ENCODE measurements at regions of chr14 and their contacts with region 1.

Region 1: DNA sequence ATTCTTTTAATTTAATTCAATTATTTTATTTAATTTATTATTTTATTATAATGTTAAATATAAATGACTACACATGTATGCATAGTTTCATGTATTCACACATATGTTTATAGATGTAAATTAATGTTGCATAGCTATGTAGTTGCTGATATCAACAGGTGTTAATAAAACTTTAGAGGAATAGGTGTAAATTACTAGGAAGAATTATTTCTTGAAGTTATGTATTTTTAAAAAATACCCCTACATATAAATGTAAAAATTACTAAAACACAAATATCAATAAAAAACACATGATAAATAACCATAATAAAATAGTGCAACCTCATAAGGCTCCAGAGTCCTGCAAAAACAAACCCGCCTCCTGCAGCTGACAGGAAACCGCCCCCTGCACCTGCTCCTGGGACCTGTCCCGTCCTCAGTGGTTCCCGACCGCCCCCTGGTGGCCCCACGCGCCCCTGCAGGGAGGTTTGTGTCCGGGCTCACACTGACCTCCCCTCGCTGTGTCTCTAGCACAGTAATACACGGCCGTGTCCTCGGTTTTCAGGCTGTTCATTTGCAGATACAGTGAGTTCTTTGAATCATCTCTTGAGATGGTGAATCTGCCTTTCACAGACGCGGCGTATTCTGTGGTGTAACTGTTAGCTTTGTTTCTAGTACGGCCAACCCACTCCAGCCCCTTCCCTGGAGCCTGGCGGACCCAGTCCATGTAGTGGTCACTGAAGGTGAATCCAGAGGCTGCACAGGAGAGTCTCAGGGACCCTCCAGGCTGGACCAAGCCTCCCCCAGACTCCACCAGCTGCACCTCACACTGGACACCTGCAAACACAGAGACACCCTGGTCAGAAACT is 1264.0 kb downstream of the TMEM121 start:
- DNase-seq: peak; percentile 77
- CTCF ChIP-seq: peak; percentile 83

Region 2: GRCh38 chr14:106728611-106729010 is 61.8 kb before region 1 on chr14:
- CTCF ChIA-PET with region 1: no interaction called
- POLR2A ChIA-PET with region 1: no interaction called
- DNase-seq: no peak
- CTCF ChIP-seq: no peak

Region 3: GRCh38 chr14:106776395-106776983 is 13.9 kb before region 1 on chr14:
- CTCF ChIA-PET with region 1: interaction called, 14 read pairs
- POLR2A ChIA-PET with region 1: no interaction called
- DNase-seq: no peak
- CTCF ChIP-seq: no peak

Region 4: GRCh38 chr14:106802423-106803364 is 12.3 kb after region 1 on chr14:
- CTCF ChIA-PET with region 1: interaction called, 23 read pairs
- POLR2A ChIA-PET with region 1: no interaction called
- DNase-seq: peak; percentile 26
- CTCF ChIP-seq: peak; percentile 35

Region 5: GRCh38 chr14:106823552-106823951 is 33.1 kb after region 1 on chr14:
- CTCF ChIA-PET with region 1: interaction called, 23 read pairs
- POLR2A ChIA-PET with region 1: no interaction called
- DNase-seq: no peak
- CTCF ChIP-seq: no peak

Region 6: GRCh38 chr14:106837870-106838269 is 47.5 kb after region 1 on chr14:
- CTCF ChIA-PET with region 1: interaction called, 113 read pairs
- POLR2A ChIA-PET with region 1: no interaction called
- DNase-seq: no peak
- CTCF ChIP-seq: no peak